ENCODE measurements at regions of chr18 and their contacts with region 1.

Region 1: GRCh38 chr18:36095936-36096519 is 28.7 kb upstream of the RPRD1A start:
- DNase-seq: no peak
- H3K4me3 ChIP-seq: no peak overlapping the region
- H3K27ac ChIP-seq: no peak overlapping the region
- H3K4me1 ChIP-seq: no peaks in the 10 kb centered on the region; a peak in 1 of 7 replicates
- H3K27me3 ChIP-seq: no peaks in the 10 kb centered on the region; a peak in 1 of 7 replicates
- CTCF ChIP-seq: peak in 2 of 3 experiments; percentile 50 to 52; a peak in 2 of 4 replicates
- EP300 ChIP-seq: no peak
- POLR2A ChIP-seq: no peak
- RAD21 ChIP-seq: peak; percentile 68 to 74

Region 2: GRCh38 chr18:35917044-35917443 is 179.0 kb before region 1 on chr18:
- CTCF ChIA-PET with region 1: no interaction called
- POLR2A ChIA-PET with region 1: no interaction called
- DNase-seq: no peak
- H3K4me3 ChIP-seq: no peak overlapping the region
- H3K27ac ChIP-seq: no peak overlapping the region
- H3K4me1 ChIP-seq: peaks cover 0 to 4% (median 3%) of the 10 kb centered on the region in 4 experiments; a peak in 5 of 7 replicates
- H3K27me3 ChIP-seq: no peaks in the 10 kb centered on the region
- CTCF ChIP-seq: peak in 2 of 3 experiments; percentile 46 to 58; a peak in 3 of 4 replicates
- EP300 ChIP-seq: no peak
- POLR2A ChIP-seq: no peak
- RAD21 ChIP-seq: peak; percentile 43 to 58

Region 3: DNA sequence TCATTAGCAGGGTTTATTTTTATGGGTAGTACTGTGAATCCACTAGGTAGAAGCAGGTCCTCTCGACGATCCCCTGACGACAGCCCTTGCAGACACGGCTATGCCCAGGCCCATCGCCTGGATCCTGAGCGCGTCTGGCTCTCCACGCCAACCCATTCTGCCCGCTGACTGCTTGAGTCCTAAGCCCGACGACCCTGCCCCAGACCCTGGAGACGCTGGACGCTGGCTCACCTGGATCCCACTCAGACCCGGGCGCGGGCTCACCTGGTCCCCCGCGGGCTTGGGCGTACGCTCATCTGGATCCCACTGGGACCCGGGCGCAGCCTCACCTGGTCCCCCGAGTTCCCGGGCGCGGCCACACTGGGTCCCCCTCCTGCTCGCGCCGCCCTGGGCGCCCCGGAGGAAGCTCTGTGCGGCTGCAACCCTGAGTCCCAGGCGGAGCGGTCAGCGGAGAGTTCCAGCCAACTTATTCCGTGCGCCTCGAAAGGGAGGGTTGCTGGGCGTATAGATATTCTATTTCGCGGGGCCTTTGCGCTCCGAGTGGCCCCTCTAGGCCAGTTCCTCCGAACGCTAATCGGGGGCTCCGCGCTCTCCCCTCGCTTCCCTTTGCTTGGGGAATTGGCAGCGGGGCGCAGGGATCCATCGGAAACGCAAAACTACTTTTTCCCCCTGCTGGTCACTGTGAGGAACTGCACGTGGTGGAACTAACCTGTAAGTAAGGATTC is 146.0 kb before region 1 on chr18:
- CTCF ChIA-PET with region 1: no interaction called
- POLR2A ChIA-PET with region 1: no interaction called
- DNase-seq: peak in 1 of 2 experiments; percentile 86
- H3K4me3 ChIP-seq: peak overlapping the region; percentile 75 to 87 (median 80)
- H3K27ac ChIP-seq: no peak overlapping the region
- H3K4me1 ChIP-seq: peaks cover 0 to 7% (median 2%) of the 10 kb centered on the region in 4 experiments; a peak in 4 of 7 replicates
- H3K27me3 ChIP-seq: no peaks in the 10 kb centered on the region
- CTCF ChIP-seq: peak; percentile 69 to 86 (median 75)
- EP300 ChIP-seq: peak in 1 of 2 experiments; percentile 11; a peak in 1 of 3 replicates
- POLR2A ChIP-seq: peak in 1 of 2 experiments; percentile 15; a peak in 1 of 3 replicates
- RAD21 ChIP-seq: peak; percentile 59 to 75

Region 4: DNA sequence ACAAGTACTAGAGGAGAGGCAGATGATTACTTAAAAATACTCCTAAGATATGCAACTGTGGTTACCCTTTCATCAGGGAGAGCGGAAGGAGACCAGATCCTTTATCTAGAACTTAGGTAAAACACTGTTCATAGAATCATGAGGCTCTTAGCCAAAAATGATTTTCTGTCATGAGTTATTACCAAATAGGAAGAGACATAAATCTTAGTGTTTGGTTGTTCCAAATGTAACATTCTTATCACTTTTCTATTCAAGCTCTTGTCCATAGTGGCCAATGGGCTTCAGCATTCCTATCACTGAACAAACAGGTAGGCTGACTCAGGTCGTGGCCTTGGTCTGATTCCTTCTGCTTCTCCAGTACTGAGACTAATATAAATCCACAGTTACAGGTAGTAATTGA is 67.2 kb before region 1 on chr18:
- CTCF ChIA-PET with region 1: no interaction called
- POLR2A ChIA-PET with region 1: no interaction called
- DNase-seq: no peak
- H3K4me3 ChIP-seq: no peak overlapping the region
- H3K27ac ChIP-seq: no peak overlapping the region
- H3K4me1 ChIP-seq: no peaks in the 10 kb centered on the region
- H3K27me3 ChIP-seq: no peaks in the 10 kb centered on the region
- CTCF ChIP-seq: no peak
- EP300 ChIP-seq: no peak
- POLR2A ChIP-seq: no peak
- RAD21 ChIP-seq: no peak

Region 5: GRCh38 chr18:36107477-36107876 is 11.4 kb after region 1 on chr18:
- CTCF ChIA-PET with region 1: interaction called, 11 read pairs
- POLR2A ChIA-PET with region 1: interaction called, 3 read pairs
- DNase-seq: no peak
- H3K4me3 ChIP-seq: no peak overlapping the region
- H3K27ac ChIP-seq: no peak overlapping the region
- H3K4me1 ChIP-seq: no peaks in the 10 kb centered on the region
- H3K27me3 ChIP-seq: no peaks in the 10 kb centered on the region
- CTCF ChIP-seq: no peak
- EP300 ChIP-seq: no peak
- POLR2A ChIP-seq: no peak
- RAD21 ChIP-seq: no peak

Region 6: DNA sequence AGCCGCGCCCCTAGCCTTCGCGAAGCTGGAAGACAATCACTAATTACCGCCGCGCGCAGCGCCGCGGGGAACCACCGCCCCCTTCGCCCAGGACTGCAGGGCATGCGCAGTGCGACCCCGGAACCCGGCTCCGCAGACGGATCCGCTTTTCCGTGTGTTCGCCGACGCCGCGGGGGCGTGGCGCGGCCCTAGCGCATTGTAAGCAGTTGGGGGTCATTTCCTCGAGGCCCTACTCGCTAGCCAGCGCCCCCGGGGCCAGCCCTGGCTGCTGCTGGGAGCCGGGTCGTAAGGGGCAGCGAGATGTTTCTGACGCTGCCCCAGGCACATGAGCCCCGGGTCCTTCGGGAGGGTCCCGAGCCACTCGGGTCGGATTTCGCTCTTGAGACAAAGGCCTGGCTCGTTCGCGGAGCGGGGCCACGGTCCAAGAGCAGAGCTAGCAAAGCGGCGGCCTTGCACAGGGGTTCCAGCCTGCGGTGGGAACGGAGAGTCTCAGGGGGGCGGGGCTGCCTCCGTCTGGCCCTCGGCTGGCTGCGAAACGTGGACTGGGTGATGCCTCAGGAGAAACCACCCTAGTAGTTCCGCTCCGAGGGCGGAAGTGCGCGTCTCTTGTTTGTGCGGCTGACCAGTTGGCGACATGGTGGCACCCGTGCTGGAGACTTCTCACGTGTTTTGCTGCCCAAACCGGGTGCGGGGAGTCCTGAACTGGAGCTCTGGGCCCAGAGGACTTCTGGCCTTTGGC is 33.4 kb after region 1 on chr18 and contains the starts of genes ELP2 and SLC39A6:
- CTCF ChIA-PET with region 1: interaction called, 10 read pairs
- POLR2A ChIA-PET with region 1: no interaction called
- DNase-seq: peak; percentile 89 to 98
- H3K4me3 ChIP-seq: peak within 1 kb of the TSS; percentile 94 to 99 (median 95)
- H3K27ac ChIP-seq: peak within 1 kb of the TSS; percentile 95
- H3K4me1 ChIP-seq: peaks cover 0 to 6% (median 3%) of the 10 kb centered on the region in 4 experiments; a peak in 3 of 7 replicates
- H3K27me3 ChIP-seq: 0 out of 7 replicates have a peak, but pooled peaks cover 0 to 2% (median 0%) of the 10 kb centered on the region in 4 experiments
- CTCF ChIP-seq: peak in 1 of 3 experiments; percentile 0; a peak in 1 of 4 replicates
- EP300 ChIP-seq: no peak; a peak in 1 of 3 replicates
- POLR2A ChIP-seq: peak in 1 of 2 experiments; percentile 81; a peak in 2 of 3 replicates
- RAD21 ChIP-seq: no peak
- total RNA-seq, gene ELP2: 156 and 165 TPM in 2 replicates
- total RNA-seq, gene SLC39A6: 36.8 and 37.2 TPM in 2 replicates

Region 7: GRCh38 chr18:36212301-36213171 is 116.5 kb after region 1 on chr18:
- CTCF ChIA-PET with region 1: no interaction called
- POLR2A ChIA-PET with region 1: no interaction called
- DNase-seq: no peak
- H3K4me3 ChIP-seq: no peak overlapping the region
- H3K27ac ChIP-seq: no peak overlapping the region
- H3K4me1 ChIP-seq: no peaks in the 10 kb centered on the region
- H3K27me3 ChIP-seq: no peaks in the 10 kb centered on the region
- CTCF ChIP-seq: peak in 1 of 3 experiments; percentile 8; a peak in 1 of 4 replicates
- EP300 ChIP-seq: no peak
- POLR2A ChIP-seq: no peak
- RAD21 ChIP-seq: peak; percentile 23 to 48; a peak in 3 of 4 replicates